A549 (cell line): ENCODE measurements at regions of chr12 and their contacts with region 1.

Region 1: GRCh38 chr12:26274441-26275312 is 79.3 kb downstream of the SSPN start:
- DNase-seq: peak; percentile 91 to 98
- ATAC-seq: peak; percentile 96 to 97
- H3K4me3 ChIP-seq: no peak overlapping the region
- H3K27ac ChIP-seq: peak overlapping the region; percentile 80 to 83
- H3K4me1 ChIP-seq: peaks cover 53% of the 10 kb centered on the region
- CTCF ChIP-seq: peak; percentile 49
- EP300 ChIP-seq: peak; percentile 82 to 92; a peak in 3 of 5 replicates
- POLR2A ChIP-seq: no peak
- RAD21 ChIP-seq: peak; percentile 68 to 81

Region 2: GRCh38 chr12:25866586-25867378 is 407.9 kb before region 1 on chr12:
- CTCF ChIA-PET with region 1: no interaction called
- POLR2A ChIA-PET with region 1: no interaction called
- DNase-seq: no peak
- ATAC-seq: no peak
- H3K4me3 ChIP-seq: no peak overlapping the region
- H3K27ac ChIP-seq: no peak overlapping the region
- H3K4me1 ChIP-seq: no peaks in the 10 kb centered on the region
- CTCF ChIP-seq: no peak
- EP300 ChIP-seq: no peak
- POLR2A ChIP-seq: no peak
- RAD21 ChIP-seq: no peak

Region 3: DNA sequence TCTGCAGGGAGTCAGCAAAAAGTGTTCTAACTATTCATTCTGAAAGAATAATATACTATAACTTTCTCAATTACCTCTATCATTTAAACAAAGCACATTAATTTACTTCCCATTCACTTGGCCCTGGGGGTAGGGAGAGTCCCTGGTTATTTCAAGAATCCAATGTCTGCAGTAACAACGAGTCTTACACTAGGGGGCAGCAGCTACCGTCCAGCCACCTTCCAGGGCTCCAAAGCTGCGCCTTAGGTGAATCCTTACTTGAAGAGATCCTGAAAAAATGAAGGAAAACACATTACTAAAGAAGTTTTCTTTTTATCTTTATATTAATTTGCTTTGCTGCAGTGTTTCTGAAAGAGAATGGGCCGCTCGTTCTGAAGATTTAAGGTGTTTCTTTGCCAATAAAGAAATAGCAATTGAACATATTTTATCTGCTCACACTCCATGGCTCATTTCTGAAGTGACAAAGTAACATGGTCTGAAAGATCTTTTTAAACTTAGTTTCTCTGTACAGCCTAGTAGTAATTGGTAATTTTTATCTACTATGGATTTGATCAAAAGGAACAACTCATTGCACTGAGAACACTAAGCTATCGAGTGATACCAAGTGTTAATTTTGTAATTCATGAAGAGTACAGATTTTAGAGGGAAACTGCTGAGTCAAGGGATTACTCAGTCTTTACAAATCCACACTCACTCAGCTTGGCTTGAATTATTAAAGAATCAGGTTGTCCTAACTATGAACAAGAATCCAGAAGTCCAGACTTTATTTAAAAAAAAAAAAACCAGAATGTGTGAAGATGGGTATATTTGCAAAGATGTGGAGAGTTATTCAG is 177.4 kb before region 1 on chr12:
- CTCF ChIA-PET with region 1: interaction called, 16 read pairs
- POLR2A ChIA-PET with region 1: no interaction called
- DNase-seq: peak; percentile 80 to 86
- ATAC-seq: peak; percentile 97 to 100
- H3K4me3 ChIP-seq: no peak overlapping the region
- H3K27ac ChIP-seq: peak overlapping the region in 1 of 2 experiments; percentile 5; a peak in 1 of 6 replicates
- H3K4me1 ChIP-seq: 0 out of 3 replicates have a peak, but pooled peaks cover 5% of the 10 kb centered on the region
- CTCF ChIP-seq: peak; percentile 97
- EP300 ChIP-seq: no peak
- POLR2A ChIP-seq: no peak
- RAD21 ChIP-seq: peak; percentile 92 to 95

Region 4: DNA sequence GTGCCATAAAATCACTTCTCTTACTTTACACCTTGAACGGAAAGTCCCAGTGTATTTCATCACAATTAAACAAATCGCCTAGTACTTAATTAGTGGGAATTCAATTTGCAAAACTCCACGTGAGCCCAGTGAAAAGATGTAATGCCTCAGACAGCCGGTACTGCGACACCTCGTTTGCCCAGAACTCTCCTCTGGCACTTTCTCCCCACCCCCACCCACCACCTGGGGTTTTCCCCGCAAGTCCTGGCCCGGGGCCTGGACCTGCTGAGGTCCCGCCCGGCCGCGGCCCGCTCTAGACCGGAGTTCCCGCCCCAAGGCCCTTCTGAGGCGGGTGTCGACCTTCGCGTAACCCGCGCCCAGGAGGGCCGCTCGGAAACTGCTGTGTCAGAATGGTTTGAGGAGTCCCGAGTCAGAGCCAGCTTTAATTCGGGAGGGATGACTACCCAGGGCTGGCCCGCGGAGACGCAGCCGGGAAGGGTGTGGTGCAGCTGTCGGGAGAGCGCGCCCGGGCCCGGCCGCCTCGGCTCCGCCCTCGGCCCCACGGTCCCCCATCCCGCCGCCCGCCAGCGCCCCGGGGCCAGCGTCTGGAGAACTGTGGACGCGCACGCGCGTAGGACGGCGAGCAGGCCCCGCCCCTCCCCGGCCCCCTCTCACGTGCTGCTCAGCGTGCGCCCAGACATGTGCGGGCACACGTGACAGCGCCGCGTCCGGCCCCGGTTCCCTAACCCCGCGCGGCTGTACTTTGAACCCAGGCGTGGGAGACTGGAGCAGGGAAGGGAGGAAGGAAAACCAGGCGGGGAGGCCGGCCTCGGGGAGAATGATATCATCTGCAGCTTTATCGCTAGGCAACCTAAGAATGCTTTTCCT is 160.6 kb before region 1 on chr12:
- CTCF ChIA-PET with region 1: interaction called, 110 read pairs
- POLR2A ChIA-PET with region 1: interaction called, 13 read pairs
- DNase-seq: peak; percentile 73 to 91
- ATAC-seq: peak; percentile 89 to 94
- H3K4me3 ChIP-seq: peak overlapping the region; percentile 53
- H3K27ac ChIP-seq: peak overlapping the region; percentile 80 to 94
- H3K4me1 ChIP-seq: peaks cover 26% of the 10 kb centered on the region
- CTCF ChIP-seq: no peak
- EP300 ChIP-seq: no peak; a peak in 1 of 5 replicates
- POLR2A ChIP-seq: peak; percentile 57
- RAD21 ChIP-seq: no peak

Region 5: DNA sequence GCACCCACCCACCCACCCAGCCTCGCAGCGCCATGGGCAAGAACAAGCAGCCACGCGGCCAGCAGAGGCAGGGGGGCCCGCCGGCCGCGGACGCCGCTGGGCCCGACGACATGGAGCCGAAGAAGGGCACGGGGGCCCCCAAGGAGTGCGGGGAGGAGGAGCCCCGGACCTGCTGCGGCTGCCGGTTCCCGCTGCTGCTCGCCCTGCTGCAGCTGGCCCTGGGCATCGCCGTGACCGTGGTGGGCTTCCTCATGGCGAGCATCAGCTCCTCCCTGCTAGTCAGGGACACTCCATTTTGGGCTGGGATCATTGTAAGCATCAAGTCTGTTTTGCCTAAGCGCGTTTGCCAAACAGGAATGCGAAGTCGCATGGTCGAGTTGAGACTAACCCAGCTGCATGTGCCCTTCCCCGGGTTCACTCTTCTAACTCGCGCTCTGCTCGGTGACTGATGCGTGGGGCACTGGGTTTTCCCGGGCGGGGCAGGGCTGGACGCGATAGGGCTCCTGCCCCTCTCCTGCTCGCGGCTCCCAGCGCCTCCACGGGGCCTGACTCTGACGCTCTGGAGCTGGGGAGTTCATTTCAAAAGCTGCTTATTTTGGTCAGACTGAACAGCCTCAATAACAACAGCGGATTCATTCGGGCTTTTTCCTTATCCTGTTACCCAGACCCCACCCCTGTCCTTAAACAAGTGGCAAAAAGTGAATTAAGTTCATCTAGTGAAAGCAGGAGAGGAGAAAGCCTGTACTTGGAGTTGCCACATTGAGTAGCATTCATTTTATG is 78.8 kb before region 1 on chr12:
- CTCF ChIA-PET with region 1: interaction called, 11 read pairs
- POLR2A ChIA-PET with region 1: interaction called, 11 read pairs
- DNase-seq: peak; percentile 7 to 43
- ATAC-seq: peak; percentile 89 to 92
- H3K4me3 ChIP-seq: peak overlapping the region; percentile 56
- H3K27ac ChIP-seq: peak overlapping the region; percentile 83 to 93
- H3K4me1 ChIP-seq: no peaks in the 10 kb centered on the region
- CTCF ChIP-seq: no peak
- EP300 ChIP-seq: no peak
- POLR2A ChIP-seq: peak; percentile 26
- RAD21 ChIP-seq: no peak; a peak in 1 of 5 replicates

Region 6: GRCh38 chr12:26309646-26310045 is 35.0 kb after region 1 on chr12:
- CTCF ChIA-PET with region 1: no interaction called
- POLR2A ChIA-PET with region 1: no interaction called
- DNase-seq: no peak
- ATAC-seq: no peak
- H3K4me3 ChIP-seq: no peak overlapping the region
- H3K27ac ChIP-seq: no peak overlapping the region
- H3K4me1 ChIP-seq: no peaks in the 10 kb centered on the region
- CTCF ChIP-seq: no peak
- EP300 ChIP-seq: no peak
- POLR2A ChIP-seq: no peak
- RAD21 ChIP-seq: 0 out of 5 replicates have a peak, but pooled peaks have one; percentile 9 to 12

Region 7: GRCh38 chr12:26340649-26341048 is 66.0 kb after region 1 on chr12:
- CTCF ChIA-PET with region 1: no interaction called
- POLR2A ChIA-PET with region 1: no interaction called
- DNase-seq: no peak
- ATAC-seq: no peak
- H3K4me3 ChIP-seq: no peak overlapping the region
- H3K27ac ChIP-seq: no peak overlapping the region
- H3K4me1 ChIP-seq: peaks cover 7% of the 10 kb centered on the region; the same call in 1 of the 3 replicates
- CTCF ChIP-seq: no peak
- EP300 ChIP-seq: no peak
- POLR2A ChIP-seq: no peak
- RAD21 ChIP-seq: no peak

Region 8: GRCh38 chr12:27549801-27550652 is 1275.3 kb after region 1 on chr12:
- CTCF ChIA-PET with region 1: no interaction called
- POLR2A ChIA-PET with region 1: no interaction called
- DNase-seq: peak; percentile 71 to 95
- ATAC-seq: peak; percentile 89 to 92
- H3K4me3 ChIP-seq: peak overlapping the region; percentile 30
- H3K27ac ChIP-seq: peak overlapping the region; percentile 90 to 96
- H3K4me1 ChIP-seq: peaks cover 50% of the 10 kb centered on the region
- CTCF ChIP-seq: no peak
- EP300 ChIP-seq: peak in 1 of 2 experiments; percentile 75; a peak in 3 of 5 replicates
- POLR2A ChIP-seq: no peak
- RAD21 ChIP-seq: peak in 1 of 2 experiments; percentile 12; a peak in 1 of 5 replicates